ENCODE measurements at regions of chr20 and their contacts with region 1.

Region 1: GRCh38 chr20:53578492-53579222 is 15.0 kb downstream of the ZNF217 start:
- DNase-seq: peak; percentile 76
- ATAC-seq: peak; percentile 61
- H3K4me3 ChIP-seq: peak overlapping the region; percentile 79
- H3K27ac ChIP-seq: peak overlapping the region; percentile 69
- H3K4me1 ChIP-seq: peaks cover 9% of the 10 kb centered on the region
- H3K27me3 ChIP-seq: no peaks in the 10 kb centered on the region
- CTCF ChIP-seq: peak; percentile 65 to 82 (median 79)
- EP300 ChIP-seq: no peak
- POLR2A ChIP-seq: no peak
- RAD21 ChIP-seq: peak; percentile 91

Region 2: GRCh38 chr20:53487461-53488200 is 91.0 kb before region 1 on chr20:
- CTCF ChIA-PET with region 1: no interaction called
- POLR2A ChIA-PET with region 1: no interaction called
- RAD21 ChIA-PET with region 1: no interaction called
- SMC1A ChIA-PET with region 1: no interaction called
- in situ Hi-C with region 1: no loop called
- intact Hi-C with region 1: no loop called
- DNase-seq: no peak
- ATAC-seq: no peak
- H3K4me3 ChIP-seq: no peak overlapping the region
- H3K27ac ChIP-seq: no peak overlapping the region
- H3K4me1 ChIP-seq: no peaks in the 10 kb centered on the region
- H3K27me3 ChIP-seq: no peaks in the 10 kb centered on the region
- CTCF ChIP-seq: no peak
- EP300 ChIP-seq: no peak
- POLR2A ChIP-seq: no peak
- RAD21 ChIP-seq: no peak

Region 3: GRCh38 chr20:53643031-53643832 is 64.6 kb after region 1 on chr20:
- CTCF ChIA-PET with region 1: interaction called, 3 read pairs
- POLR2A ChIA-PET with region 1: interaction called, 4 read pairs
- RAD21 ChIA-PET with region 1: interaction called, 3 read pairs
- SMC1A ChIA-PET with region 1: interaction called, 21 read pairs
- in situ Hi-C with region 1: no loop called
- intact Hi-C with region 1: loop called (anchors 2 kb)
- DNase-seq: peak; percentile 92
- ATAC-seq: peak; percentile 99
- H3K4me3 ChIP-seq: peak overlapping the region; percentile 37
- H3K27ac ChIP-seq: peak overlapping the region; percentile 88
- H3K4me1 ChIP-seq: peaks cover 15% of the 10 kb centered on the region
- H3K27me3 ChIP-seq: no peaks in the 10 kb centered on the region
- CTCF ChIP-seq: 0 out of 6 replicates have a peak, but pooled peaks of 1 of the 3 experiments have one; percentile 7
- EP300 ChIP-seq: peak; percentile 18 to 87; a peak in 3 of 4 replicates
- POLR2A ChIP-seq: peak; percentile 83
- RAD21 ChIP-seq: 0 out of 2 replicates have a peak, but pooled peaks have one; percentile 13

Region 4: GRCh38 chr20:53708129-53708968 is 129.7 kb after region 1 on chr20:
- CTCF ChIA-PET with region 1: interaction called, 7 read pairs
- POLR2A ChIA-PET with region 1: no interaction called
- RAD21 ChIA-PET with region 1: interaction called, 9 read pairs
- SMC1A ChIA-PET with region 1: interaction called, 8 read pairs
- in situ Hi-C with region 1: no loop called
- intact Hi-C with region 1: loop called (anchors 2 kb)
- DNase-seq: peak; percentile 94
- ATAC-seq: peak; percentile 83
- H3K4me3 ChIP-seq: peak overlapping the region; percentile 43; the same call in 1 of the 2 replicates
- H3K27ac ChIP-seq: peak overlapping the region; percentile 97
- H3K4me1 ChIP-seq: peaks cover 45% of the 10 kb centered on the region
- H3K27me3 ChIP-seq: no peaks in the 10 kb centered on the region
- CTCF ChIP-seq: no peak
- EP300 ChIP-seq: peak in 1 of 2 experiments; percentile 35; a peak in 3 of 4 replicates
- POLR2A ChIP-seq: peak; percentile 36
- RAD21 ChIP-seq: 0 out of 2 replicates have a peak, but pooled peaks have one; percentile 6

Region 5: DNA sequence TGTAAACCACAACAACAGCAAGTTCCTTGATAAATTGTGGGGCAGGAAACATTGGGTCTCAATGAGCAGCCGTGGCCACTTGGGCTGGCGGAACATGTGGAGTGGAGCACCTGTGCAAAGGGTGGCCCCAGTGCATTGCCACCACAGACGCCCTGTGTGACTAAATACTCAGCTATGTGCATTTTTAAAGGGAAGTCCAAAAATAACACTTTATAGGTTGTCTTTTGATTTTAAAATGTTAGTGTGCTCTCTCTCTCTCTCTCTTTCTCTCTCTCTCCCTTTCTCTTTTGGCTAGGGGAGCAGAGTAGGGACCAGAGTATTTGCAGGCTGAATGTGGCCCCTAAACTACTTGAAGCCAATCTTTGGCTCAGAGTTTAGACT is 255.4 kb after region 1 on chr20:
- CTCF ChIA-PET with region 1: no interaction called
- POLR2A ChIA-PET with region 1: interaction called, 5 read pairs
- RAD21 ChIA-PET with region 1: no interaction called
- SMC1A ChIA-PET with region 1: interaction called, 4 read pairs
- in situ Hi-C with region 1: no loop called
- intact Hi-C with region 1: loop called (anchors 2 kb)
- DNase-seq: no peak
- ATAC-seq: peak; percentile 64
- H3K4me3 ChIP-seq: no peak overlapping the region
- H3K27ac ChIP-seq: peak overlapping the region; percentile 69
- H3K4me1 ChIP-seq: peaks cover 42% of the 10 kb centered on the region
- H3K27me3 ChIP-seq: no peaks in the 10 kb centered on the region
- CTCF ChIP-seq: no peak
- EP300 ChIP-seq: no peak; a peak in 1 of 4 replicates
- POLR2A ChIP-seq: 0 out of 2 replicates have a peak, but pooled peaks have one; percentile 21
- RAD21 ChIP-seq: peak; percentile 14; the same call in 1 of the 2 replicates

Region 6: GRCh38 chr20:53934421-53935343 is 356.0 kb after region 1 on chr20:
- CTCF ChIA-PET with region 1: interaction called, 31 read pairs
- POLR2A ChIA-PET with region 1: no interaction called
- RAD21 ChIA-PET with region 1: interaction called, 26 read pairs
- SMC1A ChIA-PET with region 1: interaction called, 30 read pairs
- in situ Hi-C with region 1: no loop called
- intact Hi-C with region 1: no loop called
- DNase-seq: no peak
- ATAC-seq: peak; percentile 77
- H3K4me3 ChIP-seq: peak overlapping the region; percentile 33; the same call in 1 of the 2 replicates
- H3K27ac ChIP-seq: peak overlapping the region; percentile 91
- H3K4me1 ChIP-seq: peaks cover 52% of the 10 kb centered on the region
- H3K27me3 ChIP-seq: no peaks in the 10 kb centered on the region
- CTCF ChIP-seq: 0 out of 6 replicates have a peak, but pooled peaks of 1 of the 3 experiments have one; percentile 4
- EP300 ChIP-seq: no peak
- POLR2A ChIP-seq: 0 out of 2 replicates have a peak, but pooled peaks have one; percentile 4
- RAD21 ChIP-seq: 0 out of 2 replicates have a peak, but pooled peaks have one; percentile 12

Region 7: GRCh38 chr20:54062812-54063280 is 484.2 kb after region 1 on chr20:
- CTCF ChIA-PET with region 1: interaction called, 3 read pairs
- POLR2A ChIA-PET with region 1: interaction called, 3 read pairs
- RAD21 ChIA-PET with region 1: interaction called, 5 read pairs
- SMC1A ChIA-PET with region 1: interaction called, 6 read pairs
- in situ Hi-C with region 1: loop called (anchors 5 kb)
- intact Hi-C with region 1: loop called (anchors 1 kb)
- DNase-seq: peak; percentile 82
- ATAC-seq: peak; percentile 42
- H3K4me3 ChIP-seq: no peak overlapping the region
- H3K27ac ChIP-seq: 0 out of 2 replicates have a peak overlapping the region, but pooled peaks have one; percentile 73
- H3K4me1 ChIP-seq: peaks cover 29% of the 10 kb centered on the region
- H3K27me3 ChIP-seq: no peaks in the 10 kb centered on the region
- CTCF ChIP-seq: peak; percentile 59 to 82 (median 73)
- EP300 ChIP-seq: no peak
- POLR2A ChIP-seq: no peak
- RAD21 ChIP-seq: peak; percentile 94

Region 8: GRCh38 chr20:54207743-54208547 is 629.3 kb after region 1 on chr20 and contains the start of gene PFDN4:
- CTCF ChIA-PET with region 1: no interaction called
- POLR2A ChIA-PET with region 1: no interaction called
- RAD21 ChIA-PET with region 1: no interaction called
- SMC1A ChIA-PET with region 1: no interaction called
- in situ Hi-C with region 1: loop called (anchors 10 kb)
- intact Hi-C with region 1: no loop called
- DNase-seq: peak; percentile 64
- ATAC-seq: peak; percentile 96
- H3K4me3 ChIP-seq: peak within 1 kb of the TSS; percentile 91
- H3K27ac ChIP-seq: peak within 1 kb of the TSS; percentile 100
- H3K4me1 ChIP-seq: peaks cover 14% of the 10 kb centered on the region
- H3K27me3 ChIP-seq: no peaks in the 10 kb centered on the region
- CTCF ChIP-seq: peak; percentile 85 to 94 (median 92)
- EP300 ChIP-seq: 0 out of 4 replicates have a peak, but pooled peaks have one; percentile 11 to 13
- POLR2A ChIP-seq: peak; percentile 77
- RAD21 ChIP-seq: peak; percentile 30; the same call in 1 of the 2 replicates
- polyA plus RNA-seq, gene PFDN4: 121 to 123 TPM

Measured in GM12878 (cell line).